MCF 10A (cell line): ENCODE measurements at regions of chr5 and their contacts with region 1.

Region 1: GRCh38 chr5:124741711-124742496 is 4.5 kb downstream of the ZNF608 start:
- DNase-seq: peak; percentile 95
- H3K4me3 Mint-ChIP-seq: no peak overlapping the region
- H3K27ac Mint-ChIP-seq: no peak overlapping the region
- H3K4me1 Mint-ChIP-seq: peaks cover 12% of the 10 kb centered on the region
- H3K27me3 Mint-ChIP-seq: no peaks in the 10 kb centered on the region
- CTCF ChIP-seq: no peak

Region 2: DNA sequence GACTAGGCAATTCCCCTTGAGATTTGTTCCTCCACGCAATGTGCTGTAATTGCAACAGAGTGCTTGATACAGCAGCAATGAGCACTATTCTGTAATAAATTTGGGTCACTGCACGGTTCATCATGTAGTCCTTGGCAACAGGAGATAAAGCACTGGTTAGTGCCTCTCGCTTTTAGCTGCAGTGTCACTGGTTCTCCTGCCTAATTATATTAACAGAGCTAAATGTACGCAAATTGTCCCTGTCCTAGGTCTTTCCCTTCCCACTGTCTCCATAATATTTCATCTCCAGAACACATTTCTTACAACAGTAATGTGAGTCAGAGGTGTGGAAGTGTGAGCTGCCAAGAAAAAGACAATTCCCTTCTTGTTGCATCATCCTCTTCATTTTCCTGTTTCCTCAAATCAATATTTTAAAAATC is 548.5 kb before region 1 on chr5:
- CTCF ChIA-PET with region 1: no interaction called
- POLR2A ChIA-PET with region 1: no interaction called
- intact Hi-C with region 1: loop called (anchors 5 kb)
- DNase-seq: peak; percentile 86
- H3K4me3 Mint-ChIP-seq: peak overlapping the region; percentile 19
- H3K27ac Mint-ChIP-seq: peak overlapping the region; percentile 57
- H3K4me1 Mint-ChIP-seq: peaks cover 21% of the 10 kb centered on the region
- H3K27me3 Mint-ChIP-seq: no peaks in the 10 kb centered on the region
- CTCF ChIP-seq: no peak

Region 3: DNA sequence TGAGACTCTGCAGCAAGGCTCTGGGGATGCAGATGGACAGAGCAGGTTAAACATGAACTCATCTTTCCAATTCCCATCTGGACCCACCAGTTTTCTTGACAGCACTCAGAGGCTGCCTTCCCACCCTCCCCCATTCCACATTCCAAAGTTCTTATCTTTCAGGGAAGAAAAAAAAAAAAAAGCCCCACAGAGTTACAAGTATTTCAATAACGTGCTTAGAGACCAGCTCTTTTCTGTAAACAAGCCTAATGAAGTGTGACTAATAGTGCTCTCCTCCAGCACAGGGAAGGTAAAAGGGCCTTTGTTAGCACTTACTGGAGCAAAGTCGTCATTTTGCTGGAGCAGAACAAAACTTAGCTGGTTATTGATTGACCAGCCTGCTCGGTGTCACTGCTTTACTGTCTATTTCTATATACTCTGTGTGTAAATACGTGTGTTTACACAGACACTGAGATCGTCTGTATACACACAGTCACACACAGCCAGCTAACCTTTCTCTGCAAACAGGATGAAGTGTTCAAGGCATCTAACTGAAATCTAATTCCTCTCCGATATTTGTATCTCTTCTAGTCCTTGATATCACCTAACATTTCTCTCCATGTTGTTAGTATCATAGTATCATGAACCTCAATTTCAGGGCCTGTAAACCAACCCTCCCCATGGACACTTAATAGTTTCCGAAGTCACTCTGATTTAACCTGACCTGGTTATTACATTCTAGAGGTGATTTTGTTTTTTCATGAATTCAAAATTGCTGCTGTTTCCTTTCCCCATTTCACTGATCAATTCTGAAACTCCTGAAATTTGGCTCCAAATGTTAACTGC is 80.4 kb before region 1 on chr5:
- CTCF ChIA-PET with region 1: no interaction called
- POLR2A ChIA-PET with region 1: interaction called, 35 read pairs
- intact Hi-C with region 1: loop called (anchors 2 kb)
- DNase-seq: peak; percentile 66
- H3K4me3 Mint-ChIP-seq: peak overlapping the region; percentile 47
- H3K27ac Mint-ChIP-seq: peak overlapping the region; percentile 95
- H3K4me1 Mint-ChIP-seq: peaks cover 48% of the 10 kb centered on the region
- H3K27me3 Mint-ChIP-seq: no peaks in the 10 kb centered on the region
- CTCF ChIP-seq: no peak

Region 4: DNA sequence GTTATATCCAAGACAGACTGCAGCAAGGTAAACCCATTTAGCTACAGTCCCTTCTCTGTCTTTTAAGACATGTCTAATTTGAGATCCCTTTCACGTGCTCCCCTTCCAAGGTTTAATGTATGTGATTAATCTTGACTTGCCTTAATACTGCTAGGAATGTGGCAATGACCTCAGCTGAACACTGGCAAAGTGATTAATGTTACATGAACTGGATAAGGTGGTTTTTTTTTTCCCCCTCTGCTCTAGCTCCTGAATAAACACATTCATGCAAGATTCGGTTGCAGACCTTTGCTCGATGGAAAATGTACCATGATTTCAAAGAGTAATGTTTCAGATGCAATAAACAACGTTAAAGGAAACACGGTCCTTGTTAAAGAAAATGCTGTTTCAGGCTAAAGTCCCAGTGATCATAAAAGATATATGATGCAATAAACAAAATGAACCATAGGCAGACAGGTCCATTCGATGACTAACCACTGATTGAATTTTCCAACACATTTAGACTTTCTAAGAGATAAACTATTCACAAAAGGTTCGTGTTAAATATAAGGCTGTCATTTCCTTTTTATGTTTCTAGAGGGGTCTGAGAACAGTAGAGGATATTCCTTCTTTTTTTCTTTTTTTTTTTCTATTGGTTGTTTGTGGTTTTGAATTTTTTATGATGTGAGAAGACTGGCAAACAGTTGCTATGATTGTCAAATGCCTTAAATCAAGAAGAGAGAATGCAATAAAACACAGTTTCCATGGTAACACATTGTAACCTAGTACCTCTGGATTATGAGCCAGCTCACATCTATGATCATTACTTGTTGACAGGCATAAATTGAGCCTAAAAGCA is 49.2 kb after region 1 on chr5:
- CTCF ChIA-PET with region 1: interaction called, 3 read pairs
- POLR2A ChIA-PET with region 1: interaction called, 16 read pairs
- intact Hi-C with region 1: loop called (anchors 1 kb)
- DNase-seq: peak; percentile 73
- H3K4me3 Mint-ChIP-seq: no peak overlapping the region
- H3K27ac Mint-ChIP-seq: peak overlapping the region; percentile 54
- H3K4me1 Mint-ChIP-seq: peaks cover 21% of the 10 kb centered on the region
- H3K27me3 Mint-ChIP-seq: no peaks in the 10 kb centered on the region
- CTCF ChIP-seq: no peak

Region 5: GRCh38 chr5:124841829-124842712 is 100.2 kb after region 1 on chr5:
- CTCF ChIA-PET with region 1: no interaction called
- POLR2A ChIA-PET with region 1: interaction called, 88 read pairs
- intact Hi-C with region 1: loop called (anchors 1 kb)
- DNase-seq: peak; percentile 100
- H3K4me3 Mint-ChIP-seq: peak overlapping the region; percentile 38
- H3K27ac Mint-ChIP-seq: peak overlapping the region; percentile 3
- H3K4me1 Mint-ChIP-seq: peaks cover 21% of the 10 kb centered on the region
- H3K27me3 Mint-ChIP-seq: no peaks in the 10 kb centered on the region
- CTCF ChIP-seq: no peak